B cell (primary cell): ENCODE measurements at regions of chr15 and their contacts with region 1.

Region 1: DNA sequence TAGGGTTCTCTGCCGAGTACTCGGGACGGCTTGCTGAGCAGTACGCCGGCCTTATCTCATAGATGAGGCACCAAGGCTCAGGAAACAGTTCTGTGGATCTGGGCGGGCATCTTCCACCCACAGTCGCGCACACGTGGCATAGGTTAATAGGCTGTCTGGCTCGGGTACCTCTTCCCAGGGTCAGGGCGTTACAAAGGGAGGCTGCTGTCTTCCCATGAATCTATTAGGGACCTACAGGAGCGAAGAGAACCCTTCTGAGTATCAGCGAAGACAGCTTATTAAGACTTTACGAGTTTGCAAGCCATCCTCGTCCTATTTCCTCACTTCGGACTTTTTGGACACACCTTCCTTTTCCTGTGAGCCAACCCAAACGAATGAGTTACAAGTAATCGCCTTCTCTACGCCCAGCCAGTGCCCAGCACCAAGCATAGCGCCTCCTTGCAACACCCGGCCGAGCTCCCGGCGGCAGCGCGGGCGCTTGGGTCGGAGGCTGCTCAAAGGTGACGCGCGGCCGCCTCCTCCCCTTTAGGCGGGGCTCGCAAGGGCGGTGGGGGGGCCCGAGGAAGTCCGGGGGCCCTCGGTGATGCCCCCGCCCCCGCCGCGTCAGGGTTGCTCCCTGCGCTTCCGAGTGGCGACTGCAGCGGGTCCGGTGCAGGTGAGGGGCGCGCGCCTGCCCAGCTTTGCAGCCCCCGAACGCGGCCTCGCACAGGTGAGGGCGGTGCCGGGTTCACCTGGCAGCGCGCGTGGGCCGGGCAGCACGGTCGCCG is at the start of gene MCTP2:
- DNase-seq: peak; percentile 91
- ATAC-seq: peak; percentile 87
- H3K4me3 ChIP-seq: peak within 1 kb of the TSS; percentile 70 to 96 (median 80)
- H3K4me3 Mint-ChIP-seq: peak within 1 kb of the TSS; percentile 95
- H3K27ac ChIP-seq: peak within 1 kb of the TSS; percentile 88 to 90
- H3K27ac Mint-ChIP-seq: peak within 1 kb of the TSS; percentile 93
- H3K4me1 ChIP-seq: peaks cover 53 to 59% of the 10 kb centered on the region in 2 donors
- H3K4me1 Mint-ChIP-seq: peaks cover 68% of the 10 kb centered on the region
- H3K27me3 ChIP-seq: no peaks in the 10 kb centered on the region
- H3K27me3 Mint-ChIP-seq: no peaks in the 10 kb centered on the region
- CTCF ChIP-seq: peak; percentile 24
- total RNA-seq, gene MCTP2: 64.8 and 68.5 TPM in 2 replicates

Region 2: DNA sequence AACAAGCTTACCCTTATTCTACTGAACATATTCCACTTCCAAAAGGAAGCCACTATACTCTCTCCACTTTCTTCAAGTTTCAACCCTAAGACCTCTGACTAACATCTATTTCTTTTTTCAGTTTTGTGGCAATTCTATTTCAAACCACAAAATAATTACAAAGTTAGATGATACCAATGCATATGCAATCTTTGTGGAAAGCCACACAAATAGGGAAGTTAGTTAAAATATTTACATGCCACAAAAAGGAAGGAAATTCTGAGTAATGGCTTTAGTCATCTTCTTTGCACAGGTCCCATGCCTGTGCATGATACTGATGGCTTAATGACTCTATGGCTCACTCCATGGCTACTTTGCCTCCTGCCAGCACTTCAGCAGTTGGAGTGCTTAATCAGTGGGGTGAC is 56.7 kb before region 1 on chr15:
- CTCF ChIA-PET with region 1: interaction called, 7 read pairs
- POLR2A ChIA-PET with region 1: no interaction called
- intact Hi-C with region 1: loop called (anchors 1 kb)
- DNase-seq: peak; percentile 66
- ATAC-seq: peak; percentile 91
- H3K4me3 ChIP-seq: no peak overlapping the region
- H3K4me3 Mint-ChIP-seq: peak overlapping the region; percentile 48
- H3K27ac ChIP-seq: no peak overlapping the region
- H3K27ac Mint-ChIP-seq: peak overlapping the region; percentile 3
- H3K4me1 ChIP-seq: peaks cover 19 to 22% of the 10 kb centered on the region in 2 donors
- H3K4me1 Mint-ChIP-seq: peaks cover 22% of the 10 kb centered on the region
- H3K27me3 ChIP-seq: peaks cover 0 to 14% (median 3%) of the 10 kb centered on the region in 4 experiments
- H3K27me3 Mint-ChIP-seq: peaks cover 43% of the 10 kb centered on the region
- CTCF ChIP-seq: no peak

Region 3: DNA sequence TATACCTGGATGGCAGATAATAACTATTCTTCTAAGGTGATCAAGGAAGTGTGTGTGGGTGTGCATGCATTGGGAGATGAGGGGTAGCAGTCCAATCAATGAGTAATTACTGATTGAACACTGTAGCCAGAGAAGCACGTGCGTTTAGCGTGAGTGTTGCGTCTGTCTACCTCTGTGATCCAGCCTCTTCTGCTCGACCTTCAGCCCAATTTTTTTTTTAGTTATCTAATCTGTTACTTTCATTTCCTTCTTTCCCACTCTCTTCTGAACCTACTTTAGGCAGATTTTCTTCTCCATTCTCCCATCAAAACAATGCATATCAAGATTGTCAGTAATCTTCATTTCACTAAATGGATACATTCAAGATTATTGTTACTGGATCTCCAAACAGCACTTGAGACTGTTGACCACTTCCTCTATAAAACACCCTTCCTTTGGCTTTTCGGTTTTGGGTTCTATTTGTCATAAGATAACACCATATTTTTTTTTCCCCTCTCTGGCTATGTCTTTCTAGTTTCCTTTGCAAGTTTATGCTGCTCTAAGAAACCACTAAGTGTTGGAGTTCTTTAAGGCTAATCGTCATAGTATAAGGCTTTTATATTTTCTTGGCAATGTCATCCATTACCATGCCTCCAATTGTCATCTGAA is 41.2 kb after region 1 on chr15:
- CTCF ChIA-PET with region 1: no interaction called
- POLR2A ChIA-PET with region 1: no interaction called
- intact Hi-C with region 1: loop called (anchors 5 kb)
- DNase-seq: peak; percentile 73
- ATAC-seq: peak; percentile 72
- H3K4me3 ChIP-seq: peak overlapping the region in 1 of 5 experiments; percentile 5
- H3K4me3 Mint-ChIP-seq: no peak overlapping the region
- H3K27ac ChIP-seq: peak overlapping the region; percentile 27 to 71
- H3K27ac Mint-ChIP-seq: no peak overlapping the region
- H3K4me1 ChIP-seq: peaks cover 31 to 43% of the 10 kb centered on the region in 2 donors
- H3K4me1 Mint-ChIP-seq: peaks cover 18% of the 10 kb centered on the region
- H3K27me3 ChIP-seq: no peaks in the 10 kb centered on the region
- H3K27me3 Mint-ChIP-seq: no peaks in the 10 kb centered on the region
- CTCF ChIP-seq: no peak

Region 4: DNA sequence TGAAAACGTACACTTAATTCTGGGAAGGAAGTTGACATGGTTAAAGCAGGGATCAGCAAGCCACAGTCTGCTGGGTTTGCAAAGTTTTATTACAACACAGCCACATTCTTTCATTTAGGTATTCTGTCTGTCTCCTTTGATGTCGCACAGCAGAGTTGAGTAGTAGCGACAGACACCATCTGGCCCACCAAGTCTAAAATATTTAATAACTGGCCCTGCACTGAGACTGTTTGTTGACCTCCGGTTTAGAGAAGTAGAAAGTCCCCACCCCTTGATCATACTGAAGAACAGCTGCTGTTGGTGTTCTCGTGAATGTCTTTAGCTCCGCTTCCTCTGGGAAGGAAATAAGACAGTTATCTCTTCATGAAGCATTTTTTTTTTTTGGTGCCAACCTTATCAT is 66.4 kb after region 1 on chr15:
- CTCF ChIA-PET with region 1: interaction called, 13 read pairs
- POLR2A ChIA-PET with region 1: no interaction called
- intact Hi-C with region 1: no loop called
- DNase-seq: peak; percentile 67
- ATAC-seq: peak; percentile 85
- H3K4me3 ChIP-seq: peak overlapping the region in 2 of 5 experiments; percentile 21 to 26
- H3K4me3 Mint-ChIP-seq: peak overlapping the region; percentile 62
- H3K27ac ChIP-seq: peak overlapping the region; percentile 71
- H3K27ac Mint-ChIP-seq: peak overlapping the region; percentile 75
- H3K4me1 ChIP-seq: peaks cover 43 to 45% of the 10 kb centered on the region in 2 donors
- H3K4me1 Mint-ChIP-seq: peaks cover 71% of the 10 kb centered on the region
- H3K27me3 ChIP-seq: no peaks in the 10 kb centered on the region
- H3K27me3 Mint-ChIP-seq: no peaks in the 10 kb centered on the region
- CTCF ChIP-seq: no peak

Region 5: GRCh38 chr15:94306700-94307650 is 75.8 kb after region 1 on chr15:
- CTCF ChIA-PET with region 1: interaction called, 23 read pairs
- POLR2A ChIA-PET with region 1: interaction called, 7 read pairs
- intact Hi-C with region 1: loop called (anchors 1 kb)
- DNase-seq: peak; percentile 86
- ATAC-seq: peak; percentile 87
- H3K4me3 ChIP-seq: peak overlapping the region in 1 of 5 experiments; percentile 12
- H3K4me3 Mint-ChIP-seq: peak overlapping the region; percentile 64
- H3K27ac ChIP-seq: peak overlapping the region; percentile 58 to 64
- H3K27ac Mint-ChIP-seq: peak overlapping the region; percentile 91
- H3K4me1 ChIP-seq: peaks cover 27 to 41% of the 10 kb centered on the region in 2 donors
- H3K4me1 Mint-ChIP-seq: peaks cover 50% of the 10 kb centered on the region
- H3K27me3 ChIP-seq: no peaks in the 10 kb centered on the region
- H3K27me3 Mint-ChIP-seq: no peaks in the 10 kb centered on the region
- CTCF ChIP-seq: no peak